ENCODE measurements at regions of chr15 and their contacts with region 1.

Region 1: DNA sequence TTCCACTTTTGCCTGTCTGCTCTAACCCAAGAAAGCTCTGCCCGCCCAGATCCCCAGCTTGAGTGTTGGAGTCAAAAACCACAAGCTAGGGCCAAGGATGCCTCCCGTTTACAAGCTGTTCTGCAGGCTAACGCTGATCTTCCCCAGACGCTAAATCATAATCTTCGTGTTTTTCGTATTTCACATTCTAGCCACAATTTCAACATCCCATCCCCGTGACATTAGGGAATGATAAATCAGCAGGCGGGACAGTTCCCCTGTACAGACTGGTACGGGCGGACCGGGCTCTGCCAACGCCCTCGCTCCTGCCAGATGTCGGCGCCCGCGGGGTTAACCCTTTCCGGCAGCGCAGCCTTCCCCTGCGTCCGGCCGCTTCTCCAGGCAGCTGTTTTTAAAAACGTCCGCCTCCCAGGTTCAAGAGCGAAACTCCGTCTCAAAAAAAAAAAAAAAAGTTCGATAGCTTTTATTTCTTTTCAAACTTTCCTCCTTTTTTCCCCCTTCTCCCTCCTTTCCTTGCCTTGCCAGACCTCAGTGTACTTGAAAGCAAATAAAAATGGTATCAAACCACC is 81.0 kb upstream of the BNC1 start:
- DNase-seq: peak; percentile 87
- H3K4me3 ChIP-seq: peak overlapping the region; percentile 5 to 36 (median 31)
- H3K27ac ChIP-seq: peak overlapping the region; percentile 51
- H3K4me1 ChIP-seq: peaks cover 17% of the 10 kb centered on the region
- H3K27me3 ChIP-seq: no peaks in the 10 kb centered on the region
- CTCF ChIP-seq: no peak

Region 2: DNA sequence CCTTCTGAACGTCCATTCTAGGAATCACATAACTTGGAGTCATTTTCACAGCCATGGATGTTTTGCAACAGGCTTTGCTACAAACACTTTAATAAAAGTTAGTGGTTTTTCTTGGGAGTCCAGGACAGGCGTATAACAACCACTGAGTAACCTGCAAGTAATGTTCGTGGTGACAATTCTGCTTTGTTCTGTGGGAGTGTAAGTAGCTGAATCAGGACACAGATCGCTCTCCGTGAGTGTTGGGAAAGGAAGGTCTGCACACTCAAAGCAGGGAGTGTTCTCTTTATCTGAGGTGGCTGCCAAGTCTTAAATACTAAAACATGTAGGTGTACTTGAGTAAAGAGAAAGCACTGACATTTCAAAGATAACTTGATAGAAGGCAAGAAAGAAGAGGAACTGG is 73.1 kb before region 1 on chr15:
- CTCF ChIA-PET with region 1: no interaction called
- dilution Hi-C with region 1: loop called (anchors 5 kb)
- in situ Hi-C with region 1: loop called (anchors 10 kb)
- intact Hi-C with region 1: no loop called
- DNase-seq: peak; percentile 92
- H3K4me3 ChIP-seq: no peak overlapping the region
- H3K27ac ChIP-seq: peak overlapping the region; percentile 67
- H3K4me1 ChIP-seq: peaks cover 47% of the 10 kb centered on the region
- H3K27me3 ChIP-seq: no peaks in the 10 kb centered on the region
- CTCF ChIP-seq: no peak

Region 3: DNA sequence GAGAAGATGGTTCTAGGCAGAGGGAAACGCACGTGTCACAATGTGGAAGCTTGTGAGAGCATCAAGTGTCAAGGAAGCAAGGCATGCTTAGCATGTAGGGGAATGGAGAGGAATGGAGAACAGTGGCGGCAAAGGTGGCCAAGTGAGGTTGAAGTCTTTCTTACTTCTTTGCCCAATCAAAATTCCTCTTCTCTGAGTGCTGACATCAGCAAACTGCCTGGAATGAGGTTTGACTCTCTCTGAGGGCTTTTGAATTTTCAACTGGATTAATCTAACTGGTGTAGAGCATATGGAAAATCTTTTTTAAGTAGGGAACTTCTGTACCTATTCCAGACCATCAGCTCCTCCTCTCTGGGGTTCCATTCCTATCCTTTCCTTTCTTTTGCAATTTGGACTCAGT is 19.1 kb before region 1 on chr15:
- CTCF ChIA-PET with region 1: no interaction called
- dilution Hi-C with region 1: no loop called
- in situ Hi-C with region 1: no loop called
- intact Hi-C with region 1: no loop called
- DNase-seq: no peak
- H3K4me3 ChIP-seq: no peak overlapping the region
- H3K27ac ChIP-seq: no peak overlapping the region
- H3K4me1 ChIP-seq: no peaks in the 10 kb centered on the region
- H3K27me3 ChIP-seq: no peaks in the 10 kb centered on the region
- CTCF ChIP-seq: no peak

Region 4: GRCh38 chr15:83380682-83381081 is 15.2 kb after region 1 on chr15:
- CTCF ChIA-PET with region 1: no interaction called
- dilution Hi-C with region 1: no loop called
- in situ Hi-C with region 1: no loop called
- intact Hi-C with region 1: loop called (anchors 1 kb)
- DNase-seq: peak; percentile 84
- H3K4me3 ChIP-seq: no peak overlapping the region
- H3K27ac ChIP-seq: peak overlapping the region; percentile 97
- H3K4me1 ChIP-seq: peaks cover 45% of the 10 kb centered on the region
- H3K27me3 ChIP-seq: no peaks in the 10 kb centered on the region
- CTCF ChIP-seq: peak; percentile 43 to 75

Region 5: GRCh38 chr15:83422081-83422480 is 56.6 kb after region 1 on chr15:
- CTCF ChIA-PET with region 1: no interaction called
- dilution Hi-C with region 1: no loop called
- in situ Hi-C with region 1: loop called in 1 of 2 experiments (anchors 10 kb)
- intact Hi-C with region 1: no loop called
- DNase-seq: no peak
- H3K4me3 ChIP-seq: no peak overlapping the region
- H3K27ac ChIP-seq: no peak overlapping the region
- H3K4me1 ChIP-seq: no peaks in the 10 kb centered on the region
- H3K27me3 ChIP-seq: no peaks in the 10 kb centered on the region
- CTCF ChIP-seq: no peak

Measured in mammary epithelial cell (primary cell).